ENCODE measurements at regions of chr2 and their contacts with region 1.

Region 1: GRCh38 chr2:27762951-27763906 is 8.3 kb upstream of the MRPL33 start:
- DNase-seq: no peak
- ATAC-seq: no peak
- H3K4me3 ChIP-seq: no peak overlapping the region
- H3K27ac ChIP-seq: no peak overlapping the region
- H3K4me1 ChIP-seq: peaks cover 0 to 24% of the 10 kb centered on the region in 2 donors
- H3K27me3 ChIP-seq: no peaks in the 10 kb centered on the region
- CTCF ChIP-seq: no peak
- POLR2A ChIP-seq: no peak

Region 2: GRCh38 chr2:28094739-28095138 is 331.5 kb after region 1 on chr2:
- in situ Hi-C with region 1: no loop called
- intact Hi-C with region 1: loop called (anchors 5 kb)
- DNase-seq: no peak
- ATAC-seq: no peak
- H3K4me3 ChIP-seq: no peak overlapping the region
- H3K27ac ChIP-seq: no peak overlapping the region
- H3K4me1 ChIP-seq: peaks cover 15 to 37% of the 10 kb centered on the region in 2 donors
- H3K27me3 ChIP-seq: no peaks in the 10 kb centered on the region
- CTCF ChIP-seq: no peak
- POLR2A ChIP-seq: no peak

Measured in gastrocnemius medialis (tissue), 4 donors.